ENCODE measurements at regions of chr3 and their contacts with region 1.

Region 1: DNA sequence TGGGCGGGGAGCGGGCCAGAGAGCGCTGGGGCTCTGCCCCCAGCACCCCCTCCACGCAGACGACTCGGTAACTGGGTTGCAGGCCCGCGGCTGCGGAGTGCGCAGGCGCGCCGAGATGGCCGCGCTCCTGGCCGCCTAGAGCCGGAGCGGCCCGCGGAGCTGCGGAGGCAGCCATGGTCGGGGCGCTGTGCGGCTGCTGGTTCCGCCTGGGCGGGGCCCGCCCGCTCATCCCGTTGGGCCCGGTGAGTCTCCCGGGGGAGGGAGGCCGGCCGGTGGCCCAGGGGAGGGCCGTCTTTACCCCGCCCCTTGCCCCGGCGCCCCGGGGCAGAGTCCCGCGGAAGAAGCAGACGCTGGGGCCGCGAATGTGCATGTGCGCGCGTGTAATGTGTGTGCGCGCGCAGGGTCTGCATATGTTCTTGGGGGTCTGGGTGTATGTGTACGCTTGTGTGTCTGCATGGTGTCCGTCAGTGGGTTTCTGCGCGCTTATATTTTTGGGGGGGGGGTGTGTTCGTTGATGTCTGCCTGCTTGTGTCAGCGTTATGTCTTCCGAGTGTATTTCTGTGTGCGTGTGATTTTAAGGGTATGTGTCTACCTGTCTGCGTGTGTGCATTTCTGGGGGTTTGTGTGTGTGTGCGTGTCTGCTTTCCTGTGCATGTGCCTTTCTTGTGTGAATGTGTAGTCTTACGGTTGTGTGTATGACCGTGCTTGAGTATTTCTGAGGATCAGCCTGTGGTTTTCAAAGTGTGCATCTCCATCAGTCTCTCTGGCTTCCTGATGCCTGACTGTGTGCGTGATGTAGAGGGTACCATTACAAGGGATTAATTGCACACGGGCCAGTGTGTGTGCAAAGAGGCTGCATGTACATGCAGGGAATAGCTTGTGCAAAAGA is at the start of gene ABHD14A:
- DNase-seq: peak; percentile 92
- total RNA-seq, gene ABHD14A: 8.4 to 18.6 TPM

Region 2: GRCh38 chr3:51941798-51942602 is 33.2 kb before region 1 on chr3 and contains the starts of genes PARP3 and RRP9:
- intact Hi-C with region 1: loop called in 1 of 2 experiments (anchors 1 kb)
- DNase-seq: peak; percentile 100
- total RNA-seq, gene PARP3: 16.5 to 22.3 TPM
- total RNA-seq, gene RRP9: 13.4 to 14.9 TPM

Region 3: DNA sequence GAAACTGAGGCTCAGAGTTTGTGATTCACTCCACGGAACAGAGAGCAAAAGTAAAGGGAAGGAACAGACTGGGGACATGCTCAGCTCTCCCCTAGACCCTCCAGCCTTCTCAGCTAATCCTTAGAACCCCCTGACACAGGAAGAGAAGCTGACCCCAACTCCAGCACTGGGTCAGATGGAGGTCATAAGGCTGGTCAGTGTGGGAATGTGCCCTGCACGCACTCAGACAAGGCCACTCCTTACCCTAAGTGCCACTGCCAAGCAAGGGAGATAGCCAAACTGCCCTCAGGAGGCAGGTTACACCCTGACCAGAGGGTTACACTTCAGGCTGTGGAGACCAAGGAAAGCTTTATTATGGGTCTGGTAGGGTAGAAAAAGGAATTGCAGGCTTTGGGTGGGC is 19.3 kb after region 1 on chr3:
- intact Hi-C with region 1: loop called in 1 of 2 experiments (anchors 1 kb)
- DNase-seq: no peak